Right ventricle myocardium superior (tissue), 1 donor: ENCODE measurements at regions of chr17 and their contacts with region 1.

Region 1: DNA sequence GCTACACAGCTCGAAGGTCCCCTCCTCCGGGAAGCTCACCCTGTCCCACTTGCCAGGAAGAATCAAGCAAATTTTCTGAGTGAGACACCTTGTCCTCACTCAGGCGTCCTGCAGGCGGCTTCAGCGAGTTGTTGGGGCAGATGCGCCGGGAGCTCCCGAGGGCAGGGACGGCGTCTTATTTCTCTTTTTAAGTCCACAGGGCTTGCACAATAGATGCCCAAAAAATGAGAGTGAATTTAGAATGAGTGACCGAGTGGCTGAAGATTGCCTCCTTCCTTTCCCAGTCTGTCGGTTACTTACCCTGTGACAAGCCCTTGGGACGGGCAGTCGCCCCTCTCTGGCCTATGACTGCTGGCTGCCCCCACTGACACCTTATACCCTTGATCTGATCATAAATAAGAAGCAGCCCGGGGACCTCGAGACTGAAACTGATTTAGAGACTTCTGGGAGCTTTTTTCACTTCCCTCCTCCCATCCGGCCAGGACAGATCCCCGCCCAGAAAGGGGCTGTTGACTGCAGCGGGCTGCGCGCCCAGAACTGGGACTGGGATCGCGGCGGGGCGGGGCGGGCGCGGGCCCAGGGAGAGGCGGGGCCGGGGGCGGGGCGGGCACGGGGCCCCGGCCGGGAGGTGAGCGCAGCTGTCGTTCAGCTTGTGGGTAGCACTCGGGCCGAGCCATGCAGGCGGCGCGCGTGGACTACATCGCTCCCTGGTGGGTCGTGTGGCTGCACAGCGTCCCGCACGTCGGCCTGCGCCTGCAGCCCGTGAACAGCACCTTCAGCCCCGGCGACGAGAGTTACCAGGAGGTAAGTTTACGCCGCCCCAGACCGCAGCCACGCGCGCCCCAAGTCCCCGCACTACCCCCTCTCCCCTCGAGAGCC is at the start of gene TTYH2:
- DNase-seq: peak; percentile 92
- ATAC-seq: peak; percentile 88
- total RNA-seq, gene TTYH2: 41.8 TPM

Region 2: GRCh38 chr17:74296548-74296936 is 83.4 kb after region 1 on chr17:
- intact Hi-C with region 1: loop called (anchors 5 kb)
- DNase-seq: peak; percentile 83
- ATAC-seq: peak; percentile 86